HEK293T (cell line): ENCODE measurements at regions of chr9 and their contacts with region 1.

Region 1: GRCh38 chr9:93453047-93453914 is at the start of gene FAM120AOS:
- DNase-seq: peak; percentile 84

Region 2: DNA sequence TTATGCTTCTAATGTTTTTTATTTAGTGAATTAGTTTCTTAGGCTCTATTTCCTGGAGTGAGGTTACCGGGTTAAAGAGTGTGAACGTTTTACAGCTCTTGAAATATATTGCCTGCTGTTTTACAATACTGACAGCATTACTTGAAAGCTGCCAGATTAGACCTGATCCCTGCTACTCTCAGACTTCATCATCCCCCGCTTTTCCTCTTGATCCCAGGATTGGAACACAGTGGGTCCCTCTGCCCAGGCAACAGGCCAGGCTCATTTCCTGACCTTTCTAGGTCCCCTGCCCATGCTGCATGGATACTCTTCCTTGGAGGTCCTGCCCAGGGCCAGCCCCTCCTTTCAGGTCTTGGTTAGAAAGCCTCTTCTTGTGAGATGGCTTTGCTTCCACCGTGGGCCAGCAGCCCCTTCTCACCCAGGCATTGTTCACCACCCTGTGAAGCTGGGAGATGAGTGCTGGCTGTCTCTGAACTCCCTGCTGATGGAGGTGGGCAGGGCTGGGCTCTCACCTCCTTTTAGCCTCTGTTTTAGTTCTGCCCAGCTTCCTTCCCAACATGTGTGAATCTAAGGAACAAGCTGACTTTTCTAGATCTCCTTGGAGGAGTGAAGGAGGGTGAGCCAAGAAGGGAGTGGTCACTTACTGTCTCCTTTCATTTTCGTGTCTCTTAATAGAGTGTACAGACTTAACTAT is 15.6 kb after region 1 on chr9:
- CTCF ChIA-PET with region 1: interaction called, 3 read pairs
- POLR2A ChIA-PET with region 1: interaction called, 15 read pairs
- DNase-seq: peak; percentile 75

Region 3: DNA sequence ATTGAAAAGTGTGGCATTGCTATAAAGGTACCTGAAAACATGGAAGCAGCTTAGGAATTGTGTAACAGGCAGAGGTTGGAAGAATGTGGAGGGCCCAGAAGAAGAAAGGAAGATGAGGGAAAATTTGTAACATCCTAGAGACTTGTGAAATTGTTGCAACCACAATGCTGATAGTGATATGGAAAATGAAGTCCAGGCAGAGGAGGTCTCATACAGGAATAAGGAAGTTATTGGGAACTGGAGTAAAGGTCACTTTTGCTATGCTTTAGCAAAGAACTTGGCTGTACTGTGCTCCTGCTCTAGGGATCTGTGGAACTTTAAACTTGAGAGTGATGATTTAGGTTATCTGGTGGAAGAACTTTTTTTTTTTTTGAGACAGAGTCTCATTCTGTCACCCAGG is 674.5 kb after region 1 on chr9:
- CTCF ChIA-PET with region 1: no interaction called
- POLR2A ChIA-PET with region 1: no interaction called
- DNase-seq: no peak

Region 4: GRCh38 chr9:95268681-95269080 is 1815.4 kb after region 1 on chr9:
- CTCF ChIA-PET with region 1: no interaction called
- POLR2A ChIA-PET with region 1: no interaction called
- DNase-seq: peak; percentile 40